ENCODE measurements at regions of chr5 and their contacts with region 1.

Region 1: DNA sequence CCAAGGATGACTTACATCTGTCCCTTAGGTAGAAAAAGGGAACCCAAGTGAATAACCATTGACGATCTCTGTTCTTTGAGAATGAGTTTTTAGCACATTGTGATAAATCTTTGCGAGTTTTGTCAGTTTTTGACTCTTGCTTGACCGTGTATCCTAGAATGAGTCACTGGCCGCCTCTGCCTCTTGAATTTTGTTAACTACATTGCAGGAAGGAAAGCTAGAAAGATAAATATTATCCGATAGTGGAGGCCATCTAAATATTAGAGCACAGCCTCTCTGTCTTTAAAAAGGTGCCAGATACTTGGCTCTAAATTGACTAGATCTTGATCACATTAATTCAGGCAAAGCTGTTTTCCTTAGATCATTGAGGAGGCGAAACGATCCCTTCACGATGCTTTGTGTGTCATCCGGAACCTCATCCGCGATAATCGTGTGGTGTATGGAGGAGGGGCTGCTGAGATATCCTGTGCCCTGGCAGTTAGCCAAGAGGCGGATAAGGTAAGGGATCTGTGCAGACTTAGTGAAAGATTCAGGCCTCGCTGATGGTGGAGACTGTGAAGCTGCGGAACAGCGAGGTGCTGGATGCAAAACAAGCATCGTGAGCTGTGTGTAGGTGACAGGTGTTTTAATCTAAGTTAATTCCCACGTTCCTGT is 12.2 kb downstream of the CCT5 start:
- DNase-seq: peak in 1 of 4 experiments; percentile 67
- ATAC-seq: peak; percentile 10
- H3K4me3 ChIP-seq: no peak overlapping the region
- H3K27ac ChIP-seq: no peak overlapping the region
- H3K4me1 ChIP-seq: peaks cover 0 to 9% of the 10 kb centered on the region in 2 experiments; a peak in 3 of 5 replicates
- H3K27me3 ChIP-seq: no peaks in the 10 kb centered on the region
- CTCF ChIP-seq: no peak
- EP300 ChIP-seq: 0 out of 2 replicates have a peak, but pooled peaks have one; percentile 9
- POLR2A ChIP-seq: no peak
- RAD21 ChIP-seq: no peak

Region 2: GRCh38 chr5:9924614-9925013 is 337.6 kb before region 1 on chr5:
- CTCF ChIA-PET with region 1: no interaction called
- POLR2A ChIA-PET with region 1: no interaction called
- in situ Hi-C with region 1: no loop called
- intact Hi-C with region 1: no loop called
- DNase-seq: no peak
- ATAC-seq: no peak
- H3K4me3 ChIP-seq: no peak overlapping the region
- H3K27ac ChIP-seq: no peak overlapping the region
- H3K4me1 ChIP-seq: no peaks in the 10 kb centered on the region
- H3K27me3 ChIP-seq: no peaks in the 10 kb centered on the region
- CTCF ChIP-seq: no peak
- EP300 ChIP-seq: no peak
- POLR2A ChIP-seq: no peak
- RAD21 ChIP-seq: no peak

Region 3: GRCh38 chr5:10220243-10220642 is 42.0 kb before region 1 on chr5:
- CTCF ChIA-PET with region 1: no interaction called
- POLR2A ChIA-PET with region 1: no interaction called
- in situ Hi-C with region 1: no loop called
- intact Hi-C with region 1: no loop called
- DNase-seq: no peak
- ATAC-seq: no peak
- H3K4me3 ChIP-seq: no peak overlapping the region
- H3K27ac ChIP-seq: no peak overlapping the region
- H3K4me1 ChIP-seq: no peaks in the 10 kb centered on the region
- H3K27me3 ChIP-seq: no peaks in the 10 kb centered on the region
- CTCF ChIP-seq: no peak
- EP300 ChIP-seq: no peak
- POLR2A ChIP-seq: no peak
- RAD21 ChIP-seq: no peak

Region 4: DNA sequence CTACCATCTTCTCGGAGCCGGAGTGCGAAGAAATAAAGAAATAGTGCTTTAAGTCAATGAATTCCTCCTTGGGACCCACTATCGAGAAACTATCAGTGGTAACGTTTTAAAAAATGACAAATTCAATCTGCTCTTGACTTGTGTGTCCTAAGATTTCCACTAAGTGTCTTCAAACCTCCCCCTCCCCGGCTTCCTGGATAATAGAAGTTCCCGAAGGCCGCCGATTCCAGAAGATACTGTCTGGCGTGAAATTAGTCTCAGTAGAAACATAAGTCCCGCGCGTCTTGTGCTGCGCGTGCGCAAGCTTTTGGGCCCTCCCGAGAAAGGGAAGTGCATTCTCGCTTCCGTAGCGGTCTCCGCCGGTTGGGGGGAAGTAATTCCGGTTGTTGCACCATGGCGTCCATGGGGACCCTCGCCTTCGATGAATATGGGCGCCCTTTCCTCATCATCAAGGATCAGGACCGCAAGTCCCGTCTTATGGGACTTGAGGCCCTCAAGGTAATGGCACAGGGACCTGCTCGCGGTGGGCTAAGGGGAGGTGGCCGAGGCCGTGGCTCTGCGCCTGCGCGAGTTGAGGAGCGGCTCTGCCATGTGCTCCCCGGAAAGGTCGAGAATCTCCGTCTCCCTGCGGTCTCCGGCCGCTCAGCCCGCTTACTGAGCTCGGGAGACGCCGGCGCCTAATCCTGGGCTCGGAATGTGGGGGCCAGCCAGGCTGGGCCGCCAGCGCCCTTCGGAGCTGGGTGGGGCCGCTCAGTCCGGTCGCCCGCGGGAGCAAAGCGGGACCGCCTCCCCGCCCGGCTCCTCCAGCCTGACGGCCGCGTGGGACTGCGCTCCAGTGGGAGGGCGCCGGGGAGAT is 12.1 kb before region 1 on chr5 and contains the start of gene CCT5:
- CTCF ChIA-PET with region 1: no interaction called
- POLR2A ChIA-PET with region 1: interaction called, 72 read pairs
- in situ Hi-C with region 1: no loop called
- intact Hi-C with region 1: no loop called
- DNase-seq: peak; percentile 93 to 99 (median 96)
- ATAC-seq: peak; percentile 76
- H3K4me3 ChIP-seq: peak within 1 kb of the TSS; percentile 83
- H3K27ac ChIP-seq: peak within 1 kb of the TSS; percentile 95
- H3K4me1 ChIP-seq: peaks cover 12 to 20% of the 10 kb centered on the region in 2 experiments
- H3K27me3 ChIP-seq: no peaks in the 10 kb centered on the region
- CTCF ChIP-seq: no peak
- EP300 ChIP-seq: peak; percentile 15; the same call in 1 of the 2 replicates
- POLR2A ChIP-seq: peak; percentile 99
- RAD21 ChIP-seq: 0 out of 4 replicates have a peak, but pooled peaks of 1 of the 2 experiments have one; percentile 9
- polyA plus RNA-seq, gene CCT5: 926 to 1,606 TPM

Region 5: GRCh38 chr5:10439692-10440091 is 177.4 kb after region 1 on chr5:
- CTCF ChIA-PET with region 1: no interaction called
- POLR2A ChIA-PET with region 1: no interaction called
- in situ Hi-C with region 1: no loop called
- intact Hi-C with region 1: loop called (anchors 5 kb)
- DNase-seq: peak in 2 of 4 experiments; percentile 69 to 72
- ATAC-seq: peak; percentile 41
- H3K4me3 ChIP-seq: no peak overlapping the region
- H3K27ac ChIP-seq: peak overlapping the region; percentile 57; the same call in 2 of the 3 replicates
- H3K4me1 ChIP-seq: peaks cover 26 to 38% of the 10 kb centered on the region in 2 experiments; a peak in 4 of 5 replicates
- H3K27me3 ChIP-seq: no peaks in the 10 kb centered on the region
- CTCF ChIP-seq: no peak
- EP300 ChIP-seq: peak; percentile 46; the same call in 1 of the 2 replicates
- POLR2A ChIP-seq: 0 out of 2 replicates have a peak, but pooled peaks have one; percentile 34
- RAD21 ChIP-seq: no peak